Ascending aorta (tissue), 2 donors: ENCODE measurements at regions of chr3 and their contacts with region 1.

Region 1: GRCh38 chr3:105686278-105686897 is 182.4 kb downstream of the CBLB start:
- DNase-seq: no peak
- H3K4me3 ChIP-seq: no peak overlapping the region
- H3K27ac ChIP-seq: no peak overlapping the region
- H3K4me1 ChIP-seq: no peaks in the 10 kb centered on the region
- H3K27me3 ChIP-seq: no peaks in the 10 kb centered on the region
- CTCF ChIP-seq: peak in 2 of 3 experiments; percentile 68 to 77

Region 2: GRCh38 chr3:106609666-106610301 is 923.4 kb after region 1 on chr3:
- intact Hi-C with region 1: loop called (anchors 2 kb)
- DNase-seq: peak in 1 of 2 donors; percentile 71
- H3K4me3 ChIP-seq: no peak overlapping the region
- H3K27ac ChIP-seq: no peak overlapping the region
- H3K4me1 ChIP-seq: no peaks in the 10 kb centered on the region
- H3K27me3 ChIP-seq: no peaks in the 10 kb centered on the region
- CTCF ChIP-seq: peak; percentile 68 to 88 (median 75)